AG04449 (cell line): ENCODE measurements at regions of chr6 and their contacts with region 1.

Region 1: GRCh38 chr6:158143700-158144099 is 24.4 kb downstream of the SERAC1 start:
- DNase-seq: no peak
- H3K4me3 ChIP-seq: no peak overlapping the region
- CTCF ChIP-seq: no peak

Region 2: GRCh38 chr6:157428427-157429202 is 715.1 kb before region 1 on chr6:
- CTCF ChIA-PET with region 1: no interaction called
- POLR2A ChIA-PET with region 1: no interaction called
- DNase-seq: no peak
- H3K4me3 ChIP-seq: no peak overlapping the region
- CTCF ChIP-seq: no peak

Region 3: DNA sequence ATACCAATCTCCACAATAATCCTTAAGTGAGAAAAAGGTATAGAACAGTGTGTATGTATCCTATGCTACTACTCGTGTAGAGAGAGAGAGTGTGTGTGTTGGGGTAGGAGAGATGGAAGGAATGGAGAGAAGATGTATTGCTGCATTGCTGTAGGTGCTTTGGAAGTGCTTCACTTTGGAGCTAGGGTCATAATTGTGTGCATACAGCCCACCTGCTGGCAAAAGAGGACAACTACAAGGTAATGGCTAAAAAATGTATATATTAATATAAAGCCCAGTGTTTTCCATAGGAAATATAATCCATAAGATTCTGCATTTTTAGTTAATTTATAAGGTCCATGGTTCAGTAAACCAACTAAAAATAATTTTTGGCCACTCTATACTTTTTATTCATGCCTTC is 11.8 kb before region 1 on chr6:
- CTCF ChIA-PET with region 1: interaction called, 17 read pairs
- POLR2A ChIA-PET with region 1: no interaction called
- DNase-seq: no peak
- H3K4me3 ChIP-seq: no peak overlapping the region
- CTCF ChIP-seq: peak; percentile 41